Right lobe of liver (tissue), 6 donors: ENCODE measurements at regions of chr9 and their contacts with region 1.

Region 1: DNA sequence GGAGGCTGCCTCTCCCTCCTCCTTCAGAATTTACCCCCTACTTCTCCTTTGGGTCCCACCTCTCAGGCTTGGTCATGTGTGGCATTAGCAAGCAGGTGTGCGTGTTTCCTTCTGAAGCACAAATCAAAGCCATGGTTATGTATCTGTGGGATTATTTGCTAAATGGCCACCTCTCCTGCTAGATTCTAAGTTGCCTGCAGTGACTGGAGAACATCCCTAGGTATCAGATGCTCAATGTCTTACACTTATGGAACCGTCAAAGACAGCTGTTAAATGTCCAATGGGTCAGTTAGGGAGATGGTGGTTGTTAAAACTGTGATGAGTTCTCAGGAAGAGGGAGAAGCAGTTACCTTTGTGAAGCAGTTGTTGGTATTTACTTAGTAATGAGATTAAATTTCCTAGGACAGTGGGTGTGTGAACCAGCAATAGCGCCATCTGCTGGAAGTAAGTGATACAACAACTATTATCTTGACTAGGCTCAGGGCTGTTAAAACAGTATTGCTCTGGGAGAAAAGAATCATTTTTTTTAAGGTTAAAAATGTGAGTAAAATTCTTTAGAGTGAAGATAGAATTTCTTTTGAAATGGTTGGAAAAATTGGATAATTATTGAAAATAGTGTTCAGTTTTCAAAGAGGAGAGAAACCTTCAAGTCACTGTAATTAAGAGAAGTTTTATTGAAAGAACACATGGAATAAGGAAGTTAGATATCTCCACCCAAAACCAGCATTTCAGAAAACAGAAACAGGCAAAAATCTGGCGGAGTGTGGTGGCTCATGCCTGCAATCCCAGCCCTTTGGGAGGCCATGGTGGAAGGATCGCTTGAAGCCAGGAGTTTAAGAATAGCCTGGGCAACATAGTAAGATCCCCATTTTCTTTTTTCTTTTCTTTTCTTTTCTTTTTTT is 71.3 kb downstream of the TMC1 start:
- DNase-seq: no peak
- ATAC-seq: peak; percentile 80 to 89 (median 84)
- H3K4me3 ChIP-seq: no peak overlapping the region
- H3K27ac ChIP-seq: no peak overlapping the region
- H3K4me1 ChIP-seq: peaks cover 0 to 5% (median 2%) of the 10 kb centered on the region in 4 donors
- H3K27me3 ChIP-seq: no peaks in the 10 kb centered on the region
- CTCF ChIP-seq: peak; percentile 81 to 97 (median 88)
- POLR2A ChIP-seq: no peak

Region 2: DNA sequence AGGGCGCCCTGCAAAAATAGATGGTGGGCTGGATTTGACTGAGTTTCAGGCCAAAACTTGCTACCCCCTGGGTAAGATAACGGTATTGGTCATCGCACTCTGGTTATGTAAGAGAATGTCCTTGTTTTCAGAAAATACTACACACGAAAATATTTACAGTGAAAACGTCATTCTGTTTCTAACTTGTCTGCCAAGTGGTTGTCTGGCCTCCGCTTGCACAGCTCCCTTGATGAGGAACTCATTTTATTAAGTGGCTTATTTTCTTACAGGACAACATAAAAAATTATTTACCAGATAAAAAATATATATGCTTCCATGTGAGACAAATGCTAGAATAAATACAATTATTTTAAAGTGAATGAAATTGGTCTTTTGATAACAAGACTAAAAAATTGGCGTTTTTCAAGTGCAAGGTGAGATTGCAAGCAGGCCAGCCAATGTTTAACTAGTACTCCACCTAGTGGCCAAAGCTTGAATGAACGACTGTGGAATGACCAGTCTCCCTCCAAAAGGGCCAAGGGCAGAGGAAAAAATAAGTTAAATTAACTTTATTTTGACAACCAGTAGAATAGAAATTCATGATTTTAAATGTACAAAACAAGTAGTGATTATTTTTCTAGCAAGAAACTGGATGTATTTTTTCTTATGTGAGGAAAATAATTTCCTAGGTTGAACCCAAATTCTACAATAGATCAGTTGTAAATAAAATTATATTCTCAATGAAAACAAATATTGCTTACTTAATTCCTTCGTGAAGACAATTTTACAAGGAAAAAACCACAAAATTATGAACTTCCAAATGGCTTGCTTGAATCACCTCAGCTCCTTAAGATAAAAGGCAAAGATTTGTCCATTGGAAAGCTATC is 320.9 kb before region 1 on chr9:
- intact Hi-C with region 1: loop called in 1 of 2 experiments (anchors 10 kb)
- DNase-seq: peak in 1 of 3 donors; percentile 57
- ATAC-seq: peak; percentile 89 to 92 (median 92)
- H3K4me3 ChIP-seq: no peak overlapping the region
- H3K27ac ChIP-seq: no peak overlapping the region
- H3K4me1 ChIP-seq: peaks cover 0 to 5% (median 0%) of the 10 kb centered on the region in 4 donors
- H3K27me3 ChIP-seq: no peaks in the 10 kb centered on the region
- CTCF ChIP-seq: peak; percentile 84 to 92 (median 88)
- POLR2A ChIP-seq: no peak

Region 3: GRCh38 chr9:72292256-72292682 is 300.5 kb before region 1 on chr9:
- intact Hi-C with region 1: loop called in 1 of 2 experiments (anchors 5 kb)
- DNase-seq: no peak
- ATAC-seq: peak; percentile 52 to 66 (median 62)
- H3K4me3 ChIP-seq: no peak overlapping the region
- H3K27ac ChIP-seq: peak overlapping the region in 2 of 3 donors; percentile 5
- H3K4me1 ChIP-seq: peaks cover 0 to 31% (median 11%) of the 10 kb centered on the region in 4 donors
- H3K27me3 ChIP-seq: no peaks in the 10 kb centered on the region
- CTCF ChIP-seq: peak; percentile 55 to 62 (median 59)
- POLR2A ChIP-seq: no peak

Region 4: DNA sequence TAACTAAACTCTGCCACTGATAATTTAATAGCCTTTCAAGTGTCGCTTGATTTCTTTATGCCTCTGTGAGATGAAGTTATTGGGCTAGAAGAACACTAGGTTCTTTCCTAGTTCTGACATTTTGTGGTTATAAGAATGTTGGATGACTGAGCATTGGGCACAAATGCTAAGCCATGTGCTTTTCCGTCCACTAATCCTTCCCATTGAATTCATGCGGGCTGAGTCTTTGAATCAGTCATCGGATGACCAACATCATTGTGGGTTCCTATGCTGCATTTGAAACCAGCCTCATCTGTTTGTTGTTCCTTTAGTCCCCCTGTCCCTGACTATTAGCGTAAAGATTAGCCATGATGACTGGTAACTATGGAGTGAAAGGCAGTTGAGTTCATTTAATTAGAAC is 301.6 kb after region 1 on chr9:
- intact Hi-C with region 1: no loop called
- DNase-seq: no peak
- ATAC-seq: no peak
- H3K4me3 ChIP-seq: no peak overlapping the region
- H3K27ac ChIP-seq: no peak overlapping the region
- H3K4me1 ChIP-seq: no peaks in the 10 kb centered on the region
- H3K27me3 ChIP-seq: no peaks in the 10 kb centered on the region
- CTCF ChIP-seq: no peak
- POLR2A ChIP-seq: no peak